ENCODE measurements at regions of chr15 and their contacts with region 1.

Region 1: DNA sequence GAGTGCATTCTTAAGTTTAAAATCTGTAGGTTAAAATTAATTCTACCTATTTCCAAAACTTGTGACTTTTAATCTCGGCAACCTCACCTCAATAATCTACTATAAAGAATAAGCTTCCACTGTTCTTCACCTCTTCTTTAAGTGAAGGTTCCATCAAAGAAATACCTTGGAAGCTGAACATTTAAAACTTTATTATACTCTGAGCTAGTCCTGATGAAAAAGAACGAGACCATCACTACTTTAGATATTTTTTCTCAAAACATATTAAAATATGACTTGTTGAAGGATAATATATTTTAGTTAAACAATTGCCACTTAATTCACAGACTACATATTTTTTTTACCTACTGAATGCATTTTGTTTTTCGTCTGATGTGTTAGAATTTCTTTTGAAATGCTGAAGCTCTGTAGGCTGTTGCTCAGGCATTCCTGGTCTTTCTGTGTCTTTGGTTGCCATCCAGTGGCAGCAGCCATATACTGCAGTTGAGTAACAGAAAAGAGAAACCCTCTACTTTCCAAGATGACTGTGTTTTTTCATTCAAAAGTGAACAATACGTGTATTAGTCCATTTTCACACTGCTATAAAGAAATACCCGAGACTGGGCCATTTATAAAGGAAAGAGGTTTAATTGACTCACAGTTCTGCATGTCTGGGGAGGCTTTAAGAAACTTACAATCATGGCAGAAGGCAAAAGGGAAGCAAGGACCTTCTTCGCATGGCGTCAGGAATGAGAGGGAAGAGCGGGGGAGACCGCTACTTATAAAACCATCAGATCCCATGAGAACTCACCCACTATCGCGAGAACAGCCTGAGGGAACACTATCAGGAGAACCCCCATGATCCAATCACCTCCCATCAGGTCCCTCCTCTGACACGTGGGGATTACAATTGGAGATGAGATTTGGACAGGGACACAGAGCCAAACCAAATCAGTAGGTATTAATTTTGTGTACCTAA is 4.5 kb upstream of the GOLGA8B start:
- DNase-seq: peak; percentile 66
- CTCF ChIP-seq: peak; percentile 77

Region 2: DNA sequence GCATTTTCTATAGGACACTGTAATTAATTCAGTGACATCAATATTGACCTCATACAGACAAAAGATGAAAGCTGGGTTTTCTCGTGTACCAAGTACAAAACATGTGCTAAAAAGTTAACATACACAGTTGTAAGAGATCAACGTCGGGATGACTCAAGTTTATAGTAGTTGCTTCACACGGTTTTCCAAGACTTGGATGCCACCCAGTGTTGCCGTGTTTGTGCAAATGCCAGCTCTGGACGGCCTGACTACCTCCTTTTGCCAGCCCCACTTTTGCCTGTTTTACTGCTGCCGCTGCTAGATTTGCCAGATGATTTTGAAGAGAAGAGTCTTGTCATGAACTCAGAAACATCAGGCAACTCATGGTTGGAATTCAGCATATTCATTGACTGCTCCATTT is 503.9 kb before region 1 on chr15:
- in situ Hi-C with region 1: loop called (anchors 25 kb)
- DNase-seq: no peak
- CTCF ChIP-seq: no peak

Region 3: DNA sequence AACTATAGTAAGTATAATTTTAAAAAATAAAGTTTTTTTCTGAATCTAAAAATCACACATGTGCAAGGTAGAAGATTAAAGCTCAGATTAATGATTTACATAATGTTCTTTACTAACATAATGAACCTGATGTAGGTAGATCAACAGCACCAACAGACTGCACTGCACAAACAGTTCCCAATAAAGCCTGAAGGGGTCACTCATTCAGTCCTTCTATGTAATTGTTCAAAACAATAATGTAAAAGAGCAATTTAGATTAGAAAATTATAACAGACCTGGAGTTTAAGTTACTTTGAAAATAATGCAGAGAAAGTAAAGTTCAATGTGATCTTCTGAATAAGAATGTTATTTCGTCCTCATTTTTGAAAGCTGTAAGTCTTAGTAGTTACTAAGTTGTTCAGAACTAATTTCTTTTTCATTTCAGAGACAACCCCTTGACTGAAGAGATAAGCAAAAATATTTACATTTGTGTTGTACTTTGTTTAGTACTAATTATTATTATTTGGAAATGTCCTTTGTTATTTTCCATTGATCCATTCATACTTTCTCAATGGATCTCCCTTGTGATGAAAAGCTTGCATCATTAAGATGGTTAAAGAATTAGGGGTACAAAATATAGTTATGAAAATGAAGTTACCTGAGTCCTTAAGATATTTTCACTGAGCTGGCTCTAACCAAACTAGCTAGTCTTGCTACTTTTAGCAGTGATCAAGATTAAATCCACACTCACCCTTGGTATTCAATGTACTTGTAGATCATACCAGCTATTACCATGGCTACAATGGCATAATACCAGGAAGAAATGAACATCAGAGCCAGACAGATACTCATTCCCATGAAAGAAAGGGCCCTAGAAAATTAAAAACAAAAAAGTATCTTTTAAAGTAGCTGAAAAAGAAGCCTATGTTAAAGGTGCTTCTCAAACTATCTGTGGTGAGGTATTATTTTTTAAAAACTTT is 346.3 kb before region 1 on chr15:
- in situ Hi-C with region 1: loop called (anchors 25 kb)
- DNase-seq: peak; percentile 59
- CTCF ChIP-seq: peak; percentile 54

Region 4: GRCh38 chr15:34367101-34368081 is 220.6 kb before region 1 on chr15 and contains the start of gene LPCAT4:
- in situ Hi-C with region 1: loop called (anchors 25 kb)
- DNase-seq: peak; percentile 97
- CTCF ChIP-seq: peak; percentile 93

Region 5: DNA sequence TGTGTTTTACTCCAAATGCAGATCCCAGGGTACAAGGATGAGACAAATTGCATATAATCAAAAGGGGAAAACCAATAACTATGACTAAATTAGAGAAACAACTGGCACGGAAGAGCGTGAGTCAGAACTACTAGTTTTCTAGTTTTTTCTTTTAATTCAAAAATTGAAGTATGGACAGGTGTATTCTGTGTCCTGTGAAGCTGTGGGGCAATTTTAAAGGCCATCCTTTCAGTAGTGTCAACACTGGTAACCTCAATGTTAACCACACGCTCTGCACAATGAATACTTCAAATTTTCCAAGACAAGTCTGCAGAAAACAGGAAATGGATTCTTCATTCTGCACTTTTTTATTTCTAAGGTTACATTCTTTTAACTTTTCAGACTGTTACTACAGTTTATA is 117.9 kb before region 1 on chr15:
- in situ Hi-C with region 1: loop called (anchors 25 kb)
- DNase-seq: no peak
- CTCF ChIP-seq: no peak

Measured in GM13976 (cell line).